ENCODE measurements at regions of chr19 and their contacts with region 1.

Region 1: DNA sequence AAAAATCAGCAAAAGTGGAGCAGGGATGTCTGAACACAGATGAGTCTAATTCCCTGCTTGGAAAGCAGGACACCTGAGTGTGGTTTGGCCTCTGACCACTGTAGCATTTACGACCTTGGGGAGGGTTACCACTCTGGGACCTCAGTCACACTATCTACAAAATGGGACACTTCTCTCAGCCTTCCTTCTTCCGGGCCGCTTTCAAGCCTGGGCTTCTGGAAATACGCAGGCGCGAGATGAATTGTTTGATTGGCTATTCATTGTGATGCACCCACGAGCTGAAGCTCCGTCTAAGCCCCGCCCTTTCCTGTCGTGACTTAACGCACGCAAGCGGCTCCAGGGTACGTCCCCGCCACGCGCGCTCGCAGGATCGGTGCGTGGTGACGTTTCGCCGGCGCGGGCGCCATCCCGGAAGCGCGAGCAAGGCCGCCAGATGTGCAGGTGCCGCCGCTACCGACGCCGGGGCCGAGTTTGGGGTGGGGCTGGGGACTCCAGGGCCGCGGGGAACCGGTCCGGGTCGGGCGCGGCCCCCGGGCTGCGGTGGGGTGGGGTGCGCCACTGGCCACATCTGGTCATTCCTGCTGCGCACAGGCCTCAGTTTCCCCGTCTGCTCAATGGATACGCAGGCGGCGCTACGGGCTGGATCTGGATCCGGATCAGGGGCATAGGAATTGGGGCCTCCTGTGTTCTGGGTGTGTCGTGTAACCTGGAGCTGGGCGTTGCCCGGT is at the start of gene KXD1:
- DNase-seq: peak; percentile 88 to 100 (median 98)
- ATAC-seq: peak; percentile 99 to 100 (median 100)
- H3K4me3 ChIP-seq: peak within 1 kb of the TSS; percentile 80 to 85
- H3K4me3 Mint-ChIP-seq: peak within 1 kb of the TSS; percentile 87 to 90 (median 87)
- H3K27ac ChIP-seq: peak within 1 kb of the TSS; percentile 90
- H3K27ac Mint-ChIP-seq: peak within 1 kb of the TSS; percentile 90 to 92
- H3K4me1 ChIP-seq: peaks cover 14 to 27% of the 10 kb centered on the region in 2 experiments
- H3K4me1 Mint-ChIP-seq: peaks cover 23 to 28% (median 23%) of the 10 kb centered on the region in 3 donors
- H3K27me3 ChIP-seq: no peaks in the 10 kb centered on the region
- H3K27me3 Mint-ChIP-seq: no peaks in the 10 kb centered on the region
- total RNA-seq, gene KXD1: 73.1 to 112 (median 95.8) TPM

Region 2: DNA sequence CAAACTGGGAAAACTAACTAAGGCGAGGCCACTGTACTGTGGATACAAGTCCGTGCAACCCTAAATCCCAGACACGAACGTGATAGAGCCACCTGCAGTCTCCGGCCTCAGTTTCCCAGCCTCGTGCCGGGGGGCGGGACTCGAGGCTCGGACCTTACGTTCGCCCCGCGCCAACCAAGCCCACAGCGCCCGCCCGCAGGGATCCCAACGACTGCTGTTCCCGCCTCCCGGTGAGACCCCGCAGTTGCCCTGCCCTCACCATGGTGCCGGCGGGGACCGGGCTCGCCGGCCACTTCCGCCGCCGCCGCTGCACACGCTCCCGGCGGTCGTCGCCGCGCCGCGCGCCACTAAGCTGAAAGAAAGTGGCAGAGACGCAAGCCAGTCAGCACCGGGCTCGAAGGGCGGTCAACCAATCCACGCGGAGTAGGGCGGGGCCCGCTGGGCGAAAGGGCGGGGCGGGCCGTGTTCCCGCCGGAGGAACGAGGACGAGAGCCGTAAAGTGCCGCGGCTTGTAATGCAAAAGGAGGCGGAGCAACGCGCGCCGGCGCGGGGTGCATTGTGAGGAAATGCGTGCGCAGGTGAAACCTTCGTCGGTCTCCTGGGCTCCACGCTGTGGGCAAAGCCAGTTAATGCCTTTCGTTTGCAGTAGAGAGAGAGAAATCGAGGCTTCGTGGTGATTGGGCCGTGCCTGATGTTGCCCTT is 234.7 kb before region 1 on chr19 and contains the start of gene LSM4:
- CTCF ChIA-PET with region 1: no interaction called
- POLR2A ChIA-PET with region 1: no interaction called
- DNase-seq: peak; percentile 99 to 100 (median 99)
- ATAC-seq: peak; percentile 92 to 95 (median 94)
- H3K4me3 ChIP-seq: peak within 1 kb of the TSS; percentile 84 to 93
- H3K4me3 Mint-ChIP-seq: peak within 1 kb of the TSS; percentile 80 to 86 (median 82)
- H3K27ac ChIP-seq: peak within 1 kb of the TSS; percentile 94
- H3K27ac Mint-ChIP-seq: peak within 1 kb of the TSS; percentile 96 to 98
- H3K4me1 ChIP-seq: peaks cover 36 to 62% of the 10 kb centered on the region in 2 experiments
- H3K4me1 Mint-ChIP-seq: peaks cover 52 to 55% (median 54%) of the 10 kb centered on the region in 3 donors
- H3K27me3 ChIP-seq: no peaks in the 10 kb centered on the region
- H3K27me3 Mint-ChIP-seq: no peaks in the 10 kb centered on the region
- total RNA-seq, gene LSM4: 58.5 to 82.7 (median 69.1) TPM

Region 3: GRCh38 chr19:18543816-18544475 is 13.7 kb before region 1 on chr19:
- CTCF ChIA-PET with region 1: interaction called, 3 to 7 read pairs
- POLR2A ChIA-PET with region 1: interaction called in 1 of 2 experiments, 18 read pairs
- DNase-seq: peak; percentile 38 to 89 (median 65)
- ATAC-seq: peak; percentile 73 to 79 (median 76)
- H3K4me3 ChIP-seq: peak overlapping the region; percentile 73 to 77
- H3K4me3 Mint-ChIP-seq: peak overlapping the region; percentile 86 to 95 (median 89)
- H3K27ac ChIP-seq: peak overlapping the region; percentile 90
- H3K27ac Mint-ChIP-seq: peak overlapping the region; percentile 95 to 98
- H3K4me1 ChIP-seq: peaks cover 4 to 28% of the 10 kb centered on the region in 2 experiments
- H3K4me1 Mint-ChIP-seq: peaks cover 19 to 32% (median 27%) of the 10 kb centered on the region in 3 donors
- H3K27me3 ChIP-seq: peaks cover 0 to 9% of the 10 kb centered on the region in 2 experiments
- H3K27me3 Mint-ChIP-seq: no peaks in the 10 kb centered on the region

Region 4: DNA sequence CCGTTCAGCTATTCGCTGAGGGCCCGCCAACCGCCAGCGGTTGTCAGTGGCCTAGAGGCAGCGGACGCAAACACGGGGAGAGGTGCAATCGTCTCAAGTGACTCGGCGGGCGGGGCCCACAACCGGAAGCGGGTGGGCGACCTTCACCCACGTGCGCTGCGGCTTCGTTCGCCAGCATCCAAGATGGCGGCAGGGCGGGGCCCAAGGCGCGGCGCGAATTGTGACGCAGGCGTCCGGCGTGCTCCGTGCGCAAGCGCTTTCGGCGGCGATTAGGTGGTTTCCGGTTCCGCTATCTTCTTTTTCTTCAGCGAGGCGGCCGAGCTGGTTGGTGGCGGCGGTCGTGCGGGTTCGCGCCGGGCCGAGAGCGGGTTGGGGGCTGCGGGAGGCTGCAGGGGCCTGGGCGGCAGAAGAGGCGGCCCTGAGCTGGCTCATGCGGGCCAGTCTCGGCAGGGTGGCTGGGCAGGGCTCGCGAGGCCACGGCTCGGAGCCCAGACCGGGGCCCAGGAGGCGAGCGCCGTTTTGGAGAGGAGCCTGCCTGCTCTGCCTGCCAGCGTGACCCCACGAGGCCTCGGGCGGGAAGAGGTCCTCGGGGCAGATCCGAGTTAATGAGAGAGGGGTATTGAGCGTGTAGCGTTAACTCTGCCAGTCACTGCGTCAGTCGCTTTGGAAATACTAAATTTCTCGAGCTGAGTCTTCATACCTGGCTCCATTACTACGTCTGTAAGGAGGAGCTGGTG is 14.1 kb after region 1 on chr19 and contains the start of gene UBA52:
- CTCF ChIA-PET with region 1: interaction called, 5 to 13 read pairs
- POLR2A ChIA-PET with region 1: interaction called, 4 to 18 read pairs
- DNase-seq: peak; percentile 95 to 100 (median 98)
- ATAC-seq: peak; percentile 94 to 96 (median 95)
- H3K4me3 ChIP-seq: peak within 1 kb of the TSS; percentile 90 to 96
- H3K4me3 Mint-ChIP-seq: peak within 1 kb of the TSS; percentile 85 to 94 (median 93)
- H3K27ac ChIP-seq: peak within 1 kb of the TSS; percentile 86
- H3K27ac Mint-ChIP-seq: peak within 1 kb of the TSS; percentile 92 to 94
- H3K4me1 ChIP-seq: peaks cover 11 to 27% of the 10 kb centered on the region in 2 experiments
- H3K4me1 Mint-ChIP-seq: peaks cover 20 to 23% (median 23%) of the 10 kb centered on the region in 3 donors
- H3K27me3 ChIP-seq: no peaks in the 10 kb centered on the region
- H3K27me3 Mint-ChIP-seq: no peaks in the 10 kb centered on the region
- total RNA-seq, gene UBA52: 1,917 to 2,053 (median 1,972) TPM

Region 5: DNA sequence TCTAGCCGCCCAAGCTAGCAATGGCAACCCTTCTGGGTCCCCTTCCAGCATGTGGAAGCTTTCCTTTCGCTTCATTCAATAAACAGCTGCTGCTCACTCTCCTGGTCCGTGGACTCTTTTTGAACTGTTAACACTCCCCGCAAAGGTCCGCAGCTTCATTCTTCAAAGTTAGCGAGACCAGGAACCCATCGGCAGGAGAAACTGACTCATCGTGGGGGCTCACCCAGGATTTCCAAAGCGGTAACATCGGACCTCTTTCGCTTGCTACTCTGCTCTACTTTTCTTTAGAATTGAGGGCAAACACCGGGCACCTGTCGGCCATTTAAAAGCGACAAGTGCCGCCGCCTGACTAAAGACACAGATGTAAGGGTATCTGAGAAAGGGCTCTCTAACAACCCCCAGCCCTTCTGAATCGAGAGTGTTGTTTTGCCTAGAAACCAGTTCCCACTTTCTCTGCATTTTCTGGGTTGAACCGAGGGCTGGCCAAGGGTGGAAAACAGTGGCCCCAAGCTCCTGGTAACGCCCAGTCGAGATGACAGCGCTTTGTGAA is 19.8 kb after region 1 on chr19:
- CTCF ChIA-PET with region 1: interaction called in 1 of 2 experiments, 13 read pairs
- POLR2A ChIA-PET with region 1: interaction called in 1 of 2 experiments, 10 read pairs
- DNase-seq: no peak
- ATAC-seq: no peak
- H3K4me3 ChIP-seq: no peak overlapping the region
- H3K4me3 Mint-ChIP-seq: no peak overlapping the region
- H3K27ac ChIP-seq: no peak overlapping the region
- H3K27ac Mint-ChIP-seq: no peak overlapping the region
- H3K4me1 ChIP-seq: peaks cover 9 to 13% of the 10 kb centered on the region in 2 experiments
- H3K4me1 Mint-ChIP-seq: peaks cover 8 to 15% (median 11%) of the 10 kb centered on the region in 3 donors
- H3K27me3 ChIP-seq: no peaks in the 10 kb centered on the region
- H3K27me3 Mint-ChIP-seq: no peaks in the 10 kb centered on the region

Region 6: GRCh38 chr19:18588611-18589379 is 31.2 kb after region 1 on chr19 and contains the start of gene REX1BD:
- CTCF ChIA-PET with region 1: interaction called in 1 of 2 experiments, 13 read pairs
- POLR2A ChIA-PET with region 1: interaction called, 3 to 5 read pairs
- DNase-seq: peak; percentile 73 to 91 (median 86)
- ATAC-seq: peak; percentile 81 to 85 (median 82)
- H3K4me3 ChIP-seq: peak within 1 kb of the TSS; percentile 77 to 78
- H3K4me3 Mint-ChIP-seq: peak within 1 kb of the TSS; percentile 79 to 88 (median 80)
- H3K27ac ChIP-seq: peak within 1 kb of the TSS; percentile 93
- H3K27ac Mint-ChIP-seq: peak within 1 kb of the TSS; percentile 93 to 95
- H3K4me1 ChIP-seq: peaks cover 16 to 46% of the 10 kb centered on the region in 2 experiments
- H3K4me1 Mint-ChIP-seq: peaks cover 35 to 46% (median 37%) of the 10 kb centered on the region in 3 donors
- H3K27me3 ChIP-seq: no peaks in the 10 kb centered on the region
- H3K27me3 Mint-ChIP-seq: no peaks in the 10 kb centered on the region
- total RNA-seq, gene REX1BD: 91.8 to 166 (median 150) TPM